ENCODE measurements at regions of chr19 and their contacts with region 1.

Region 1: DNA sequence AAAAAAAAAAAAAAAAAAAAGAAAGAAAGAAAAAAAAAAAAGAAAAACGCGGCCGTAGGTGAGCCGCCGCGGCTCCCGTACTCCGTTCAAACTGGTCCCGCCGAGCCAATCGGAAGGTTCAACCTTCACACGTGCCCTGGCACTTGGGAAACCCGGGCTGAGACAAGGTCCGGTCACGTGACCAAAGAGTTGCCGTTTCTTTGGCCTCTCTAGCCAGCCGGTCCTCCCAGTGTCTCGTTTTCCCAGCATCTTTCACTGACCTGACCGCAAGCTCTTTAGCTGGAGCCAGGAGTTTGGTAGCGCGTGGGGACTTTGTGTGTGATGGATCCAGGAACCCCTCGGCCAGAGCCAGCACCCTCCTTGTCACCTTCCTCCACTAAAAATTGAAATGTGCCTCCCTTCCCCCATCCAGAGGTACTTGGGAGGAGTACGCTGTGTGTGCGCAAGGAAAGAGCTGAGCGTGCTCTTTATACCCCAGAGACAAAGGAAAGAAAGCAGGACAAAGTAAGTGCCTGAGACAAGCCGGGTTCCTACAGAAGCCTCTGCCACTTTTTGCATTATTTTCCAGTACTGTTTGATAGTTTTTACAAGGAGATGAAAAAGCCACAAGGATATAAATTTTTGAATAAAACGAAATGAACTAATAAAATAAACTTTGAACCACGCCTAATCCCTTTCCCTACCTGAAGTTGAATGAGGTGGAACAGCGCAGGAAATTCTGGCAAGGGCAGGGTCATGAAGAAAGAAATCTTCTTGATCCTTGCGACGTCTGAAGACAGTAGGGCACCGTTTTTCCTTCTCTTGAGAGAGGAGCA is 959 bp downstream of the TNPO2 start:
- DNase-seq: peak; percentile 88 to 100 (median 94)
- ATAC-seq: peak; percentile 83
- H3K4me3 ChIP-seq: peak overlapping the region; percentile 82
- H3K27ac ChIP-seq: peak overlapping the region; percentile 87
- H3K4me1 ChIP-seq: peaks cover 10 to 44% of the 10 kb centered on the region in 2 experiments; a peak in 3 of 5 replicates
- H3K27me3 ChIP-seq: no peaks in the 10 kb centered on the region
- CTCF ChIP-seq: no peak
- EP300 ChIP-seq: no peak
- POLR2A ChIP-seq: peak; percentile 85
- RAD21 ChIP-seq: no peak

Region 2: GRCh38 chr19:12551060-12551832 is 171.5 kb before region 1 on chr19 and contains the start of gene ZNF564:
- CTCF ChIA-PET with region 1: no interaction called
- POLR2A ChIA-PET with region 1: no interaction called
- in situ Hi-C with region 1: no loop called
- intact Hi-C with region 1: no loop called
- DNase-seq: peak; percentile 99
- ATAC-seq: peak; percentile 98
- H3K4me3 ChIP-seq: peak within 1 kb of the TSS; percentile 71
- H3K27ac ChIP-seq: peak within 1 kb of the TSS; percentile 83
- H3K4me1 ChIP-seq: peaks cover 16 to 32% of the 10 kb centered on the region in 2 experiments
- H3K27me3 ChIP-seq: no peaks in the 10 kb centered on the region
- CTCF ChIP-seq: no peak
- EP300 ChIP-seq: no peak
- POLR2A ChIP-seq: peak; percentile 87
- RAD21 ChIP-seq: no peak; a peak in 1 of 4 replicates
- polyA plus RNA-seq, gene ZNF564: 1.4 to 2.1 TPM

Region 3: GRCh38 chr19:12736995-12737834 is 14.4 kb after region 1 on chr19 and contains the start of gene GET3:
- CTCF ChIA-PET with region 1: no interaction called
- POLR2A ChIA-PET with region 1: interaction called, 50 read pairs
- in situ Hi-C with region 1: no loop called
- intact Hi-C with region 1: loop called (anchors 1 kb)
- DNase-seq: peak; percentile 86 to 98 (median 92)
- ATAC-seq: peak; percentile 92
- H3K4me3 ChIP-seq: peak within 1 kb of the TSS; percentile 63
- H3K27ac ChIP-seq: peak within 1 kb of the TSS; percentile 97
- H3K4me1 ChIP-seq: peaks cover 11 to 25% of the 10 kb centered on the region in 2 experiments
- H3K27me3 ChIP-seq: no peaks in the 10 kb centered on the region
- CTCF ChIP-seq: no peak
- EP300 ChIP-seq: no peak; the same call in 1 of the 2 replicates
- POLR2A ChIP-seq: peak; percentile 85
- RAD21 ChIP-seq: no peak
- polyA plus RNA-seq, gene GET3: 8.3 to 29.1 TPM

Measured in K562 (cell line).